WTC11 (cell line): ENCODE measurements at regions of chr17 and their contacts with region 1.

Region 1: DNA sequence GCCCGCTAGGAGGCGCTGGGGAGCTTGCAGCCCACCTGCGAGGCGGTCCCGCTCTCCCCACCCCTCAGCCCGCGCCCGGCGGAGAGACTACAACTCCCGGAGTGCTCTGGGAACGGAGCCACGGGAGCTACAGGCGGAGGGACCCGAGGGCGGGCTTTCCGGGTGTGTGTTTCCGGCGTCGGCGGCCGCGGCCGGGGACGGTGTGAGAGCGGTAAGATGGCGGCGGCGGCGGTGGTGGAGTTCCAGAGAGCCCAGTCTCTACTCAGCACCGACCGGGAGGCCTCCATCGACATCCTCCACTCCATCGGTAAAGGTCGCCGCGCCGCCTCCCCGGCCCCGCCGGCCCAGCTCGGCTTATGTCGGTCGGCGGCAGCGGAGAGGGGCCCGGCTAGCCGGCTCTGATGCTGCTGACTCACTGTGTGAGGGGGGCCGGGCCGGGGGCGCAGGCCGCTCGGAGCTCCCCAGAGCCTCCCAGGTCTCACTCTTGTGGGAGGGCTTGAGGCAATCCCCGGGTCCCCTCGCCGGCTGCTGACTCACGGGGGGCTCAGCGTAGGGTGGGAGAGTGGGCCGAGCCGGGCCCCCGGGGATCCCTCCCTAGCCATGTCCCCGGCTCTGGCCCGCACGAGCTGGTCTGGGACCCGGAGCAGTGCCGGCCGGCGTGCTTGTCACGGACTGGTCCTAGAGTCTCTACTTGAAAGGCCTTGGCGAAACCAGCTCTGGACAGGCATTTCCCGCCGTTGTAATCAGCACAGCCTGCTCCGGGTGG is at the start of gene PSMD11:
- DNase-seq: peak; percentile 99
- ATAC-seq: peak; percentile 99
- H3K4me3 Mint-ChIP-seq: peak within 1 kb of the TSS; percentile 95
- H3K27ac Mint-ChIP-seq: peak within 1 kb of the TSS; percentile 41
- H3K4me1 Mint-ChIP-seq: peaks cover 19% of the 10 kb centered on the region
- H3K27me3 Mint-ChIP-seq: peaks cover 29% of the 10 kb centered on the region
- CTCF ChIP-seq: no peak; the same call in none of the 2 replicates
- total RNA-seq, gene PSMD11: 133 to 155 TPM (median 146 TPM) in 3 replicates

Region 2: GRCh38 chr17:32240750-32241149 is 203.7 kb before region 1 on chr17:
- CTCF ChIA-PET with region 1: interaction called, 11 read pairs
- POLR2A ChIA-PET with region 1: no interaction called
- DNase-seq: no peak
- ATAC-seq: peak; percentile 70
- H3K4me3 Mint-ChIP-seq: no peak overlapping the region
- H3K27ac Mint-ChIP-seq: no peak overlapping the region
- H3K4me1 Mint-ChIP-seq: peaks cover 11% of the 10 kb centered on the region; the same call in 1 of the 2 replicates
- H3K27me3 Mint-ChIP-seq: no peaks in the 10 kb centered on the region; the same call in 1 of the 2 replicates
- CTCF ChIP-seq: no peak

Region 3: DNA sequence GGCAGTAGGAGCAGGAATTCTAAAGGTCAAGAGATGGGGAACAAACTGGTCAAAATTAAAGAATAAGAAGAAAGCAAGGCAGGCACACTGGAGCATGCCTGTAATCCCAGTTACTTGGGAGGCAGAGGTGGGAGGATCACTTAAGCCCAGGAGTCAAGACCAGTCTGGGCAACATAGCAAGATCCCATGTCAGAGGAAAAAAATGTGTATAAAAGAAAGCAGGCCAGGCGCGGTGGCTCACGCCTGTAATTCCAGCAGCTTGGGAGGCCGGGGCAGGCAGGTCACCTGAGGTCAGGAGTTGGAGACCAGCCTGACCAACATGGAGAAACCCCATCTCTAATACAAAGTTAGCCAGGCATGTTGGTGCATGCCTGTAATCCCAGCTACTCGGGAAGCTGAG is 50.6 kb before region 1 on chr17:
- CTCF ChIA-PET with region 1: interaction called, 19 read pairs
- POLR2A ChIA-PET with region 1: no interaction called
- DNase-seq: no peak
- ATAC-seq: no peak
- H3K4me3 Mint-ChIP-seq: no peak overlapping the region
- H3K27ac Mint-ChIP-seq: peak overlapping the region; percentile 73; the same call in 1 of the 2 replicates
- H3K4me1 Mint-ChIP-seq: no peaks in the 10 kb centered on the region
- H3K27me3 Mint-ChIP-seq: no peaks in the 10 kb centered on the region
- CTCF ChIP-seq: no peak

Region 4: GRCh38 chr17:32429598-32429997 is 14.9 kb before region 1 on chr17:
- CTCF ChIA-PET with region 1: interaction called, 41 read pairs
- POLR2A ChIA-PET with region 1: interaction called, 3 read pairs
- DNase-seq: no peak
- ATAC-seq: no peak
- H3K4me3 Mint-ChIP-seq: no peak overlapping the region
- H3K27ac Mint-ChIP-seq: no peak overlapping the region
- H3K4me1 Mint-ChIP-seq: no peaks in the 10 kb centered on the region
- H3K27me3 Mint-ChIP-seq: peaks cover 4% of the 10 kb centered on the region; the same call in 1 of the 2 replicates
- CTCF ChIP-seq: no peak

Region 5: GRCh38 chr17:32470405-32471167 is 26.1 kb after region 1 on chr17:
- CTCF ChIA-PET with region 1: interaction called, 11 read pairs
- POLR2A ChIA-PET with region 1: no interaction called
- DNase-seq: no peak
- ATAC-seq: no peak
- H3K4me3 Mint-ChIP-seq: no peak overlapping the region
- H3K27ac Mint-ChIP-seq: no peak overlapping the region
- H3K4me1 Mint-ChIP-seq: no peaks in the 10 kb centered on the region
- H3K27me3 Mint-ChIP-seq: no peaks in the 10 kb centered on the region
- CTCF ChIP-seq: no peak

Region 6: GRCh38 chr17:32510466-32510865 is 66.0 kb after region 1 on chr17:
- CTCF ChIA-PET with region 1: no interaction called
- POLR2A ChIA-PET with region 1: no interaction called
- DNase-seq: no peak
- ATAC-seq: no peak
- H3K4me3 Mint-ChIP-seq: no peak overlapping the region
- H3K27ac Mint-ChIP-seq: 0 out of 2 replicates have a peak overlapping the region, but pooled peaks have one; percentile 19
- H3K4me1 Mint-ChIP-seq: peaks cover 9% of the 10 kb centered on the region
- H3K27me3 Mint-ChIP-seq: no peaks in the 10 kb centered on the region
- CTCF ChIP-seq: no peak

Region 7: GRCh38 chr17:32525122-32525521 is 80.6 kb after region 1 on chr17:
- CTCF ChIA-PET with region 1: no interaction called
- POLR2A ChIA-PET with region 1: no interaction called
- DNase-seq: no peak
- ATAC-seq: no peak
- H3K4me3 Mint-ChIP-seq: no peak overlapping the region
- H3K27ac Mint-ChIP-seq: no peak overlapping the region
- H3K4me1 Mint-ChIP-seq: peaks cover 33% of the 10 kb centered on the region
- H3K27me3 Mint-ChIP-seq: peaks cover 4% of the 10 kb centered on the region; the same call in 1 of the 2 replicates
- CTCF ChIP-seq: no peak

Region 8: DNA sequence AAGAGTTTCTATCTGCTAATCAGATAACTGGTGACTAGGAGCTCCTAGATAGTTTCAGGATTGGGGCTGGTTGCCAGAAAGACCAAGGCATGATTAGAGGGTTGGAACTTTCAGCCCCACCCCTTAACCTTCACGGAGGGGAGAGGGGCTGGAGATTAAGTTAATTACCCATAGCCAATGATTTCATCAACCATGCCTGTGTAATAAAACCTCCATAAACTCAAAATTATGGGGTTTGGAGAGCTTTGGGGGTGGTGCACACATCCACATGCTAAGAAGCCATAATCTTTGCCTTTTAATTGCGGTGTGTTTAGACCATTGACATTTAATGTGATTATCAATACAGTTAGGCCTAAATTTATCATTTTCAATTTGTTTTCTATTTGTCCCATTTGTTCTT is 204.0 kb after region 1 on chr17:
- CTCF ChIA-PET with region 1: no interaction called
- POLR2A ChIA-PET with region 1: no interaction called
- DNase-seq: no peak
- ATAC-seq: no peak
- H3K4me3 Mint-ChIP-seq: no peak overlapping the region
- H3K27ac Mint-ChIP-seq: no peak overlapping the region
- H3K4me1 Mint-ChIP-seq: no peaks in the 10 kb centered on the region
- H3K27me3 Mint-ChIP-seq: no peaks in the 10 kb centered on the region
- CTCF ChIP-seq: no peak